MCF 10A (cell line): ENCODE measurements at regions of chr11 and their contacts with region 1.

Region 1: DNA sequence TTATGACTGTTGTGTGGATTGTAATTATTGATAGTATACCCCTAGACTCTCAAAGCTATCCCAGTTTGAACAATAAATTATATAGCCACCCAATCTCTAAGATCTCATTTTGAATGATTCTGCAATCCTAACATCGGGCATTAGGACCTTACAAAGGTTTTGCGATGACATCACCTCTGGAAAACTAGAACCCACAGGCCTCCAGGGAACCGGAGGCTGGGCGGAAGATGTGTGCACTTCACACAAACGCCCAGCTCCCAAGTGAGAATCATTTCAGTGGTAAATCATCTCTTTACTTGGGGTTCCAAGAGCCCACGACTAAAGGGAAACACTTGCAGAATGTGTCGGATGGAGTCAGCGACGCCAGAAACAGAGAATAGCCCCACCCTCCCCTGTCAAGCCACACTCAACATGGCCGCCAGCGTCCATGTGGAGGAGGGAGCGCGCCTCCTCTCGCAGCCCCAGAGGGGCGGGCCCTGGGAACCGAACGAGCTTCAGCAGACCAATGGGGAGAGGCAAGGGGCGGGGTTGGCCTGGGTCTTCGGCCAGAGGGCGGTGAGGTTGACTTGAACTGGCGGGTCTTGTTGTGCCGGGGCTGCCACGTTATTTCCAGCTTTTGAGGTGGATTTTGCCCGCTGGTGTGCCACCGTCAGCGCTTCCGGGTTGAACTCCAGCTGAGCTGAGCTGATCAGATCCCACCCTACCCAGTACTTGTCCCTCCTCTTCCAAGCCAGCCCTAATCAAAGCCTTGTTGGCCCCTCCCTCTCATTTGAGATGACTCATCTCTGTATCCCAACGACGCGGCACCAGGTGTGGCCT is 8.4 kb upstream of the MRPL48 start:
- DNase-seq: peak; percentile 98
- H3K4me3 Mint-ChIP-seq: peak overlapping the region; percentile 98
- H3K27ac Mint-ChIP-seq: peak overlapping the region; percentile 99
- H3K4me1 Mint-ChIP-seq: no peaks in the 10 kb centered on the region
- H3K27me3 Mint-ChIP-seq: no peaks in the 10 kb centered on the region
- CTCF ChIP-seq: no peak

Region 2: GRCh38 chr11:72930008-72930407 is 849.3 kb before region 1 on chr11:
- CTCF ChIA-PET with region 1: no interaction called
- POLR2A ChIA-PET with region 1: no interaction called
- intact Hi-C with region 1: no loop called
- DNase-seq: peak; percentile 33
- H3K4me3 Mint-ChIP-seq: no peak overlapping the region
- H3K27ac Mint-ChIP-seq: no peak overlapping the region
- H3K4me1 Mint-ChIP-seq: no peaks in the 10 kb centered on the region
- H3K27me3 Mint-ChIP-seq: no peaks in the 10 kb centered on the region
- CTCF ChIP-seq: no peak

Region 3: GRCh38 chr11:73429121-73429750 is 350.1 kb before region 1 on chr11:
- CTCF ChIA-PET with region 1: no interaction called
- POLR2A ChIA-PET with region 1: no interaction called
- intact Hi-C with region 1: no loop called
- DNase-seq: peak; percentile 14
- H3K4me3 Mint-ChIP-seq: no peak overlapping the region
- H3K27ac Mint-ChIP-seq: no peak overlapping the region
- H3K4me1 Mint-ChIP-seq: no peaks in the 10 kb centered on the region
- H3K27me3 Mint-ChIP-seq: no peaks in the 10 kb centered on the region
- CTCF ChIP-seq: no peak

Region 4: DNA sequence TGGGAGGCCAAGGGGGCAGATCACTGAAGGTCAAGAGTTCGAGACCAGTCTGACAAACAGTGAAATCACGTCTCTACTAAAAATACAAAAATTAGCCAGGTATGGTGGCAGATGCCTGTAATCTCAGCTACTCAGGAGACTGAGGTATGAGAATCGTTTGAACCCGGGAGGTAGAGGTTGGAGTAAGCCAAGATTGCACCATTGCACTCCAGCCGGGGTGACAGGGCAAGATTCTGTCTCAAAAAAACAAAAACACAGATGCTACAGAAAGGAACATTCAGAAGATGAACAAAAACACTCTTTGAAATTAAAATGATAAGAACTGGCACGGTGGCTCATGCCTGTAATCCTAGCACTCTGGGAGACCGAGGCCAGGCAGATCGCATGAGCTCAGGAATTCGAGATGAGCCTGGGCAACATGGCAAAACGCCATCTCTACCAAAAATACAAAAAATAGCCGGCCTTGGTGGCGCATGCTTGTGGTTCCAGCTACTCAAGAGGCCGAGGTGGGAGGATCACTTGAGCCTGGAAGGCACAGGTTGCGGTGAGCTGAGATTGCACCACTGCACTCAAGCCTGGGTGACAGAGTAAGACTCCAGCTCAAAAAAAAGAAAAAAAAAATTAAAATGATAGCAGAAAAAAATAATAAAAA is 27.0 kb before region 1 on chr11:
- CTCF ChIA-PET with region 1: interaction called, 6 read pairs
- POLR2A ChIA-PET with region 1: interaction called, 53 read pairs
- intact Hi-C with region 1: no loop called
- DNase-seq: peak; percentile 86
- H3K4me3 Mint-ChIP-seq: peak overlapping the region; percentile 55
- H3K27ac Mint-ChIP-seq: peak overlapping the region; percentile 71
- H3K4me1 Mint-ChIP-seq: peaks cover 28% of the 10 kb centered on the region
- H3K27me3 Mint-ChIP-seq: no peaks in the 10 kb centered on the region
- CTCF ChIP-seq: no peak

Region 5: GRCh38 chr11:73866586-73866996 is 87.3 kb after region 1 on chr11:
- CTCF ChIA-PET with region 1: interaction called, 4 read pairs
- POLR2A ChIA-PET with region 1: interaction called, 15 read pairs
- intact Hi-C with region 1: no loop called
- DNase-seq: peak; percentile 75
- H3K4me3 Mint-ChIP-seq: no peak overlapping the region
- H3K27ac Mint-ChIP-seq: no peak overlapping the region
- H3K4me1 Mint-ChIP-seq: peaks cover 13% of the 10 kb centered on the region
- H3K27me3 Mint-ChIP-seq: no peaks in the 10 kb centered on the region
- CTCF ChIP-seq: no peak